ENCODE measurements at regions of chr2 and their contacts with region 1.

Region 1: GRCh38 chr2:65064728-65065552 is 8.7 kb downstream of the CEP68 start:
- DNase-seq: peak; percentile 84
- ATAC-seq: peak; percentile 91
- H3K4me3 ChIP-seq: peak overlapping the region; percentile 28
- H3K27ac ChIP-seq: peak overlapping the region; percentile 78
- H3K4me1 ChIP-seq: peaks cover 30% of the 10 kb centered on the region
- H3K27me3 ChIP-seq: no peaks in the 10 kb centered on the region
- CTCF ChIP-seq: peak; percentile 86

Region 2: GRCh38 chr2:64922482-64923384 is 142.2 kb before region 1 on chr2:
- CTCF ChIA-PET with region 1: interaction called, 11 read pairs
- POLR2A ChIA-PET with region 1: no interaction called
- intact Hi-C with region 1: no loop called
- DNase-seq: no peak
- ATAC-seq: no peak
- H3K4me3 ChIP-seq: no peak overlapping the region
- H3K27ac ChIP-seq: no peak overlapping the region
- H3K4me1 ChIP-seq: no peaks in the 10 kb centered on the region; the same call in 1 of the 2 replicates
- H3K27me3 ChIP-seq: no peaks in the 10 kb centered on the region
- CTCF ChIP-seq: 0 out of 2 replicates have a peak, but pooled peaks have one; percentile 10

Region 3: DNA sequence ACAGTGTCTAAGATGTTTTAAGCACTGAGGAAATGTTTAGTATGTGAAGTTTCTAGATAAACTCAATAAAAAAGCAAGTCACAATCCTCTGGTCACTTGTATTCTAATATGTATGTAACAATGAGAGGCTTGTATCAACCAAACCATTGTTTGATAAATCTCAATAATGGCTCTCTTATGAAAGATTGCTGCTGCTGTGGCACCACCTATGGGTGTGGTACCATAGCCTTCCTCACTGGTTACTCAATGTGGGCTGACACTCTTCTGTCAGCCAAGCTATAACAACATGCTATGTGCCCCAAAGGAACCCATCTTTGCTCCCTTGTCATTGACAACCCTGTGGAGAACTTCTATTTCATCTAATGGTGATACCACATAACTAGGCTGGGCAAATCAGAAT is 77.6 kb after region 1 on chr2:
- CTCF ChIA-PET with region 1: interaction called, 3 read pairs
- POLR2A ChIA-PET with region 1: no interaction called
- intact Hi-C with region 1: loop called (anchors 1 kb)
- DNase-seq: peak; percentile 55
- ATAC-seq: peak; percentile 91
- H3K4me3 ChIP-seq: no peak overlapping the region
- H3K27ac ChIP-seq: no peak overlapping the region
- H3K4me1 ChIP-seq: no peaks in the 10 kb centered on the region
- H3K27me3 ChIP-seq: no peaks in the 10 kb centered on the region
- CTCF ChIP-seq: peak; percentile 59

Region 4: DNA sequence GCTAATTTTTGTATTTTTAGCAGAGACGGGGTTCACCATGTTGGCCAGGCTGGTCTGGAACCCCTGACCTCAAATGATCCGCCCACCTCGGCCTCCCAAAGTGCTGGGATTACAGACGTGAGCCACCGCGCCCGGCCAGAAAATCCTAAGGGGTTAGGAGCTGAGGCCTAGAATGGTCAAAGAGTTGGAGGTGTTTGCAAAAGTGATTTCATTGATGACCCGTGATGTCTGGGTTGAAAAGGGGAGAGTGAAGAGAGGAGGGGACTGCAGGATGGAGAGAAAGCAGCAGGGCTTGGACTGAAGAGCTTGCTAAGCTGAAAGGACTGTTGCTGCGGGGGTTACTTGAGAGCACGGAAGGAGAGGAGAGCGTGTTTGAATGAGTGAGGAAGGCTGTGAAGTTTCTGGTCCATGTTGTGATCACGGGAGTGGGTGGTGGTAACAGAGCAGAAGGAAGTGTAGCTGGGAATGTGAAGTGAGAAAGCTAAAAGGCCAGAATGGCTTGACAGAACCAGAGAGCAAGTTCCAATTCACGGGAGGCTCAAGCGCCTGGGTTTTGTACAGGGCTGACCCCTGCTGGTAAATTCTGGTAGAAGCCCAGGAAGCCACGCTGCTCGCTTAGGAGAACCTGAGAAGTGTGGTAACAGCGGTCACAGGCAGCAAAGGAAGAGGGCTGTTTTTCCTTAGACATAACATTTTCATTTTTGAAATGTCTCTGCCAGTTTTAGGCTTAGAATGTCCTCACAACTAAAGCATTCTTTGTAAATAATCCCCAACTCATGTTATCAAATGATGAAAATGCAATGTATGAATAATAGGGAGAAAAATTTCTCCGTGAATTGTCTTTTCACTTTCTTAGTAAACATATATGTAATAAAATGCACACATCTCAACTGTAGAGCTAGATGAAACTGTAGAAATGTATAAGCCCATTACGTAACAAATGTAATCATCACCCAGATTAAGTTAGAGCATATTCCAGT is 122.2 kb after region 1 on chr2:
- CTCF ChIA-PET with region 1: interaction called, 29 read pairs
- POLR2A ChIA-PET with region 1: no interaction called
- intact Hi-C with region 1: loop called (anchors 1 kb)
- DNase-seq: peak; percentile 90
- ATAC-seq: peak; percentile 81
- H3K4me3 ChIP-seq: peak overlapping the region; percentile 29; the same call in 1 of the 2 replicates
- H3K27ac ChIP-seq: peak overlapping the region; percentile 49
- H3K4me1 ChIP-seq: peaks cover 18% of the 10 kb centered on the region
- H3K27me3 ChIP-seq: no peaks in the 10 kb centered on the region
- CTCF ChIP-seq: peak; percentile 91

Region 5: GRCh38 chr2:65576861-65577601 is 512.1 kb after region 1 on chr2:
- CTCF ChIA-PET with region 1: no interaction called
- POLR2A ChIA-PET with region 1: no interaction called
- intact Hi-C with region 1: loop called (anchors 1 kb)
- DNase-seq: peak; percentile 96
- ATAC-seq: peak; percentile 92
- H3K4me3 ChIP-seq: peak overlapping the region; percentile 43; the same call in 1 of the 2 replicates
- H3K27ac ChIP-seq: peak overlapping the region; percentile 91
- H3K4me1 ChIP-seq: peaks cover 17% of the 10 kb centered on the region
- H3K27me3 ChIP-seq: no peaks in the 10 kb centered on the region
- CTCF ChIP-seq: no peak